CD4-positive, alpha-beta memory T cell (primary cell): ENCODE measurements at regions of chr3 and their contacts with region 1.

Region 1: GRCh38 chr3:108090701-108091451 is at the start of gene CD47:
- DNase-seq: peak; percentile 96 to 98 (median 98)
- H3K4me3 ChIP-seq: peak within 1 kb of the TSS; percentile 71 to 82
- H3K4me3 Mint-ChIP-seq: peak within 1 kb of the TSS; percentile 94 to 100 (median 98)
- H3K27ac ChIP-seq: peak within 1 kb of the TSS; percentile 96
- H3K27ac Mint-ChIP-seq: peak within 1 kb of the TSS; percentile 98 to 100 (median 99)
- H3K4me1 ChIP-seq: peaks cover 52% of the 10 kb centered on the region
- H3K4me1 Mint-ChIP-seq: peaks cover 33 to 51% (median 38%) of the 10 kb centered on the region in 4 donors
- H3K27me3 ChIP-seq: no peaks in the 10 kb centered on the region
- H3K27me3 Mint-ChIP-seq: peaks cover 0 to 1% of the 10 kb centered on the region in 2 donors
- total RNA-seq, gene CD47: 224 to 226 TPM

Region 2: GRCh38 chr3:108053067-108053466 is 37.8 kb before region 1 on chr3:
- CTCF ChIA-PET with region 1: interaction called, 3 read pairs
- POLR2A ChIA-PET with region 1: interaction called, 4 read pairs
- intact Hi-C with region 1: loop called (anchors 5 kb)
- DNase-seq: no peak
- H3K4me3 ChIP-seq: no peak overlapping the region
- H3K4me3 Mint-ChIP-seq: no peak overlapping the region
- H3K27ac ChIP-seq: no peak overlapping the region
- H3K27ac Mint-ChIP-seq: peak overlapping the region in 6 of 7 donors; percentile 2 to 68 (median 26)
- H3K4me1 ChIP-seq: peaks cover 23% of the 10 kb centered on the region
- H3K4me1 Mint-ChIP-seq: peaks cover 33 to 47% (median 38%) of the 10 kb centered on the region in 4 donors
- H3K27me3 ChIP-seq: no peaks in the 10 kb centered on the region
- H3K27me3 Mint-ChIP-seq: no peaks in the 10 kb centered on the region

Region 3: GRCh38 chr3:108079877-108080659 is 10.8 kb before region 1 on chr3:
- CTCF ChIA-PET with region 1: interaction called, 7 read pairs
- POLR2A ChIA-PET with region 1: interaction called, 20 read pairs
- intact Hi-C with region 1: loop called (anchors 1 kb)
- DNase-seq: no peak
- H3K4me3 ChIP-seq: no peak overlapping the region
- H3K4me3 Mint-ChIP-seq: peak overlapping the region; percentile 3 to 80 (median 54)
- H3K27ac ChIP-seq: no peak overlapping the region
- H3K27ac Mint-ChIP-seq: peak overlapping the region; percentile 24 to 88 (median 77)
- H3K4me1 ChIP-seq: peaks cover 100% of the 10 kb centered on the region
- H3K4me1 Mint-ChIP-seq: peaks cover 9 to 59% (median 53%) of the 10 kb centered on the region in 4 donors
- H3K27me3 ChIP-seq: no peaks in the 10 kb centered on the region
- H3K27me3 Mint-ChIP-seq: no peaks in the 10 kb centered on the region

Region 4: GRCh38 chr3:108108416-108108815 is 17.5 kb after region 1 on chr3:
- CTCF ChIA-PET with region 1: no interaction called
- POLR2A ChIA-PET with region 1: interaction called, 50 read pairs
- intact Hi-C with region 1: no loop called
- DNase-seq: no peak
- H3K4me3 ChIP-seq: no peak overlapping the region
- H3K4me3 Mint-ChIP-seq: no peak overlapping the region
- H3K27ac ChIP-seq: no peak overlapping the region
- H3K27ac Mint-ChIP-seq: no peak overlapping the region
- H3K4me1 ChIP-seq: no peaks in the 10 kb centered on the region
- H3K4me1 Mint-ChIP-seq: peaks cover 0 to 10% (median 6%) of the 10 kb centered on the region in 4 donors
- H3K27me3 ChIP-seq: no peaks in the 10 kb centered on the region
- H3K27me3 Mint-ChIP-seq: peaks cover 0 to 2% of the 10 kb centered on the region in 2 donors

Region 5: DNA sequence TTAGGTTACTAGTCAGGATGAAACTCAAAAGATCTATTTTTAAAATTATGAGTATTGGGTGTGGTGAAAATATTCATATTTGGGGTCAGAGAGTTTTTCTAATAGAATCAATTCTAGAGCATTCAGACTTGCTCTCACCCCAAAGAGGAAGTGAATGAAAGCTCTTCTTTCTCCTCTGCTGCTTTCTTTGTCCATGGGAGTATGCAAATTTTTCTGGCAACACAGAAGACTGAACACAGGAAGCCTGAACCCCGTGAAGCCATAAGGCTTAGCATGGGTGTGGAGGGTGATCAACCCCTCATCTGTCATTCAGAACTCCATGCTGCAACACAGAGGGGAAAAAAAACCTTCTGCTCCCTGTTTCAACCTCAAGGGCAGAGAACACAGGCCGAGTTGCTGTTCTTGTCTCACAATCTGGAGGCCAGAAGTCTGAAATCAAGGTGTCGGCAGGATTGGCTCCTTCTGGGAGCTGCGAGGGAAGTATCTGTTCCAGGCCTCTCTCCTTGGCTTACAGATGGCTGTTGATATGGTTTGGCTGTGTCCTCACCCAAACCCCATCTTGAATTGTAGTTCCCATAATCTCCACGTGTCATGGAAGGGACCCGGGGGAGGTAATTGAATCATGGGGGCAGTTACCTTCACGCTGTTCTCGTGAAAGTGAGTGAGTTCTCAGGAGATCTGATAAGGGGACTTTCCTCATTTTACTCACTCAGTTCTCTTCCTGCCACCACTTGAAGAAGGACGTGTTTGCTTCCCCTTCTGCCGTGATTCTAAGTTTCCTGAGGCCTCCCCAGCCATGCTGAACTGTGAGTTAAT is 33.7 kb after region 1 on chr3:
- CTCF ChIA-PET with region 1: interaction called, 32 read pairs
- POLR2A ChIA-PET with region 1: interaction called, 531 read pairs
- intact Hi-C with region 1: loop called (anchors 1 kb)
- DNase-seq: peak; percentile 74 to 90 (median 79)
- H3K4me3 ChIP-seq: peak overlapping the region; percentile 71 to 87
- H3K4me3 Mint-ChIP-seq: peak overlapping the region; percentile 84 to 94 (median 92)
- H3K27ac ChIP-seq: peak overlapping the region; percentile 86
- H3K27ac Mint-ChIP-seq: peak overlapping the region; percentile 92 to 100 (median 98)
- H3K4me1 ChIP-seq: peaks cover 69% of the 10 kb centered on the region
- H3K4me1 Mint-ChIP-seq: peaks cover 58 to 86% (median 73%) of the 10 kb centered on the region in 4 donors
- H3K27me3 ChIP-seq: no peaks in the 10 kb centered on the region
- H3K27me3 Mint-ChIP-seq: no peaks in the 10 kb centered on the region

Region 6: GRCh38 chr3:108292905-108293328 is 202.0 kb after region 1 on chr3:
- CTCF ChIA-PET with region 1: no interaction called
- POLR2A ChIA-PET with region 1: no interaction called
- intact Hi-C with region 1: loop called (anchors 5 kb)
- DNase-seq: peak in 3 of 5 donors; percentile 15 to 20 (median 16)
- H3K4me3 ChIP-seq: no peak overlapping the region
- H3K4me3 Mint-ChIP-seq: peak overlapping the region in 5 of 8 donors; percentile 22 to 67 (median 41)
- H3K27ac ChIP-seq: peak overlapping the region; percentile 9
- H3K27ac Mint-ChIP-seq: peak overlapping the region; percentile 3 to 82 (median 71)
- H3K4me1 ChIP-seq: peaks cover 22% of the 10 kb centered on the region
- H3K4me1 Mint-ChIP-seq: peaks cover 22 to 30% (median 29%) of the 10 kb centered on the region in 4 donors
- H3K27me3 ChIP-seq: no peaks in the 10 kb centered on the region
- H3K27me3 Mint-ChIP-seq: no peaks in the 10 kb centered on the region